CD8-positive, alpha-beta memory T cell (primary cell): ENCODE measurements at regions of chr9 and their contacts with region 1.

Region 1: GRCh38 chr9:105392531-105392930 is 55.3 kb upstream of the FSD1L start:
- DNase-seq: no peak
- H3K4me3 ChIP-seq: no peak overlapping the region
- H3K4me3 Mint-ChIP-seq: no peak overlapping the region
- H3K27ac ChIP-seq: no peak overlapping the region
- H3K27ac Mint-ChIP-seq: no peak overlapping the region
- H3K4me1 ChIP-seq: no peaks in the 10 kb centered on the region
- H3K4me1 Mint-ChIP-seq: peaks cover 0 to 4% (median 0%) of the 10 kb centered on the region in 3 donors
- H3K27me3 ChIP-seq: no peaks in the 10 kb centered on the region
- H3K27me3 Mint-ChIP-seq: peaks cover 8 to 23% of the 10 kb centered on the region in 2 donors

Region 2: GRCh38 chr9:105168870-105169319 is 223.6 kb before region 1 on chr9:
- CTCF ChIA-PET with region 1: no interaction called
- POLR2A ChIA-PET with region 1: interaction called, 11 read pairs
- DNase-seq: no peak
- H3K4me3 ChIP-seq: no peak overlapping the region
- H3K4me3 Mint-ChIP-seq: no peak overlapping the region
- H3K27ac ChIP-seq: no peak overlapping the region
- H3K27ac Mint-ChIP-seq: no peak overlapping the region
- H3K4me1 ChIP-seq: no peaks in the 10 kb centered on the region
- H3K4me1 Mint-ChIP-seq: no peaks in the 10 kb centered on the region
- H3K27me3 ChIP-seq: no peaks in the 10 kb centered on the region
- H3K27me3 Mint-ChIP-seq: peaks cover 5 to 13% of the 10 kb centered on the region in 2 donors

Region 3: GRCh38 chr9:105414947-105415661 is 22.6 kb after region 1 on chr9:
- CTCF ChIA-PET with region 1: no interaction called
- POLR2A ChIA-PET with region 1: no interaction called
- DNase-seq: peak; percentile 33 to 69 (median 50)
- H3K4me3 ChIP-seq: no peak overlapping the region
- H3K4me3 Mint-ChIP-seq: no peak overlapping the region
- H3K27ac ChIP-seq: no peak overlapping the region
- H3K27ac Mint-ChIP-seq: no peak overlapping the region
- H3K4me1 ChIP-seq: peaks cover 4% of the 10 kb centered on the region
- H3K4me1 Mint-ChIP-seq: no peaks in the 10 kb centered on the region
- H3K27me3 ChIP-seq: peaks cover 7% of the 10 kb centered on the region
- H3K27me3 Mint-ChIP-seq: peaks cover 23 to 44% of the 10 kb centered on the region in 2 donors